ENCODE measurements at regions of chr17 and their contacts with region 1.

Region 1: DNA sequence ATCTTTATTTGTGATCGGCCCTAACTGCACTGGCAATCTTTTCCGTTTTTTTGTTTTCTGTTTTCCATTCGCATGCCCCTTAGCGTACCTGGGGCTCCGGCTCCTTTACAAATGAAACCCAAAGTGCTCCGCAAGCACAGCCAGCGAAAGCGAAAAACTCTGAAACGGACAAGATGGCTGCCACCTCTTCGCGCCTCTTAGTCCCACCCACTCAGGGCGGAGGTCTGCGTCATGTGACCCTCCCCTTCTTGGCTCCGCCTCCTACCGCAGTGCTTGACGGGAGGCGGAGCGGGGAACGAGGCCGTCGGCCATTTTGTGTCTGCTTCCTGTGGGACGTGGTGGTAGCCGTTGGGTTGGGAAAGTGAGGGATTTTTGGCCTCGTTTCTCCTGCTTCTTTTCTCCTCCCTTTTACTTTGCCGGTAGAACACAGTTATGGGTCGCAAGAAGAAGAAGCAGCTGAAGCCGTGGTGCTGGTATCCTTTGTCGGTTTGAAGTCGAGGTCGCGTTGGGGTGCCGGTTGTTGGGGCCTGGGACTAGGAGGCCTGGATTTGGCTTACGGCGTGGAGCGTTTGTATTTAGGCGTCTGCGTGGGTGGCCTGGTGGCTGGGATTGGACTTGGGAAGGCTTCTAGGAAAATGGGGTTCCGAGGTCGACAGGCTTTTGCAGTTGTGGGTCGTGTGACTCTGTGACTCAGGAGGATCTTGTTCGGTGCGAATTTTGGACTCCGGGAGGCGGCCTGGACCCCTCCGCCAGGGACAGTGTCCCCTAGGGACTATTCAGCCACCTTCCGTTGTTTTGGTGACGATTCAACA is at the start of gene ZNF207:
- DNase-seq: peak; percentile 85 to 95 (median 95)
- ATAC-seq: peak; percentile 100
- H3K4me3 ChIP-seq: peak within 1 kb of the TSS; percentile 98
- H3K4me3 Mint-ChIP-seq: peak within 1 kb of the TSS; percentile 90 to 100 (median 98)
- H3K27ac ChIP-seq: peak within 1 kb of the TSS; percentile 98
- H3K27ac Mint-ChIP-seq: peak within 1 kb of the TSS; percentile 95 to 100 (median 99)
- H3K4me1 ChIP-seq: peaks cover 13 to 25% of the 10 kb centered on the region in 2 donors
- H3K4me1 Mint-ChIP-seq: peaks cover 19 to 54% (median 38%) of the 10 kb centered on the region in 7 donors
- H3K27me3 ChIP-seq: no peaks in the 10 kb centered on the region
- H3K27me3 Mint-ChIP-seq: no peaks in the 10 kb centered on the region
- total RNA-seq, gene ZNF207: 248 to 288 (median 281) TPM

Region 2: DNA sequence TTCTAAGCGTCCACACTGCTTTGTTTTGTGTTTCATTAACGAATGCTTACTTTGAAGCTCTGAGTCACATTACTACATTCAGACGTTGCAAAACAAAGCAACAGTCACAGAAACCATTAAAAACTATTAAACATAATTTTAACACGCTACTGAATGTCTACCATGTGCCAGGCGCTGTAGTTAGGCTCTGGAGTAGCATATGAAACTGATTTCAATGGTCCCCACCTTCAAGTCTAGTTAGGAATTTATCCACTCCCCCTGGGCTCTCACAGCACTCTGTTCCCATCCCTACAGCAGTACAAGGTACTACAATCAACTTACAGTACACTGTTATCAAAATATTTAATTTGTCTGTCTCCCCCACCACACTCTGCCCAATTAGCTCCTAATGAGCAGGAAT is 449.2 kb before region 1 on chr17:
- CTCF ChIA-PET with region 1: no interaction called
- POLR2A ChIA-PET with region 1: no interaction called
- intact Hi-C with region 1: loop called (anchors 1 to 5 kb)
- DNase-seq: peak in 1 of 9 donors; percentile 9
- ATAC-seq: no peak
- H3K4me3 ChIP-seq: peak overlapping the region; percentile 80
- H3K4me3 Mint-ChIP-seq: no peak overlapping the region
- H3K27ac ChIP-seq: peak overlapping the region; percentile 81
- H3K27ac Mint-ChIP-seq: no peak overlapping the region
- H3K4me1 ChIP-seq: peaks cover 0 to 10% of the 10 kb centered on the region in 2 donors
- H3K4me1 Mint-ChIP-seq: peaks cover 0 to 25% (median 9%) of the 10 kb centered on the region in 7 donors
- H3K27me3 ChIP-seq: no peaks in the 10 kb centered on the region
- H3K27me3 Mint-ChIP-seq: no peaks in the 10 kb centered on the region

Region 3: GRCh38 chr17:32006957-32007462 is 343.1 kb before region 1 on chr17 and contains the start of gene LRRC37B:
- CTCF ChIA-PET with region 1: no interaction called
- POLR2A ChIA-PET with region 1: interaction called, 5 read pairs
- intact Hi-C with region 1: loop called in 1 of 2 experiments (anchors 2 kb)
- DNase-seq: peak; percentile 80 to 95 (median 87)
- ATAC-seq: peak; percentile 98
- H3K4me3 ChIP-seq: peak within 1 kb of the TSS; percentile 97
- H3K4me3 Mint-ChIP-seq: peak within 1 kb of the TSS; percentile 86 to 98 (median 95)
- H3K27ac ChIP-seq: peak within 1 kb of the TSS; percentile 85
- H3K27ac Mint-ChIP-seq: peak within 1 kb of the TSS; percentile 87 to 98 (median 93)
- H3K4me1 ChIP-seq: peaks cover 9 to 14% of the 10 kb centered on the region in 2 donors
- H3K4me1 Mint-ChIP-seq: peaks cover 25 to 44% (median 35%) of the 10 kb centered on the region in 7 donors
- H3K27me3 ChIP-seq: no peaks in the 10 kb centered on the region
- H3K27me3 Mint-ChIP-seq: peaks cover 0 to 6% (median 0%) of the 10 kb centered on the region in 5 donors
- total RNA-seq, gene LRRC37B: 42.1 to 69.9 (median 56.2) TPM

Region 4: DNA sequence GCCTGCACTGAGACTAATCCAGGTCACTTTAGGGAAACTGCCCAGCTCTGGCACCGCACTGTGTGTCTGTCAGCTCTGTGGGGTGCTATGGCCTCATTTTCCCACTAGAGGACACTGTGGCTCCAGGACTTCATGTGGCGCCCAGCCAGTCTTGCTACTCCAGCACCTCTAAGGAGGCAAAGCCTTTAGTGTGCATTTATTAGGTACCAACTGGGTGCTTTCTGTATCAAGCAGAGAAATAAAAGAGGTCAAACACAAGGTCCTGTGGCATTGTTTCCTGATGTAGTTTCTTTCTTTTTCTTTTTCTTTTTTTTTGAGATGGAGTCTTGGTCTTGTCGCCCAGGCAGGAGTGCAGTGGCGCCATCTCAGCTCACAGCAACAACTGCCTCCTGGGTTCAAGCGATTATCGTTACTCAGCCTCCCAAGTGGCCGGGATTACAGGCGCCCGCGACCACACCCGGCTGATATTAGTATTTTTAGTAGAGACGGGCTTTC is 96.9 kb before region 1 on chr17:
- CTCF ChIA-PET with region 1: no interaction called
- POLR2A ChIA-PET with region 1: no interaction called
- intact Hi-C with region 1: loop called in 1 of 2 experiments (anchors 1 kb)
- DNase-seq: peak in 7 of 9 donors; percentile 18 to 75 (median 40)
- ATAC-seq: peak; percentile 98
- H3K4me3 ChIP-seq: no peak overlapping the region
- H3K4me3 Mint-ChIP-seq: no peak overlapping the region
- H3K27ac ChIP-seq: no peak overlapping the region
- H3K27ac Mint-ChIP-seq: no peak overlapping the region
- H3K4me1 ChIP-seq: no peaks in the 10 kb centered on the region
- H3K4me1 Mint-ChIP-seq: peaks cover 0 to 4% (median 0%) of the 10 kb centered on the region in 7 donors
- H3K27me3 ChIP-seq: no peaks in the 10 kb centered on the region
- H3K27me3 Mint-ChIP-seq: peaks cover 0 to 37% (median 0%) of the 10 kb centered on the region in 5 donors

Region 5: DNA sequence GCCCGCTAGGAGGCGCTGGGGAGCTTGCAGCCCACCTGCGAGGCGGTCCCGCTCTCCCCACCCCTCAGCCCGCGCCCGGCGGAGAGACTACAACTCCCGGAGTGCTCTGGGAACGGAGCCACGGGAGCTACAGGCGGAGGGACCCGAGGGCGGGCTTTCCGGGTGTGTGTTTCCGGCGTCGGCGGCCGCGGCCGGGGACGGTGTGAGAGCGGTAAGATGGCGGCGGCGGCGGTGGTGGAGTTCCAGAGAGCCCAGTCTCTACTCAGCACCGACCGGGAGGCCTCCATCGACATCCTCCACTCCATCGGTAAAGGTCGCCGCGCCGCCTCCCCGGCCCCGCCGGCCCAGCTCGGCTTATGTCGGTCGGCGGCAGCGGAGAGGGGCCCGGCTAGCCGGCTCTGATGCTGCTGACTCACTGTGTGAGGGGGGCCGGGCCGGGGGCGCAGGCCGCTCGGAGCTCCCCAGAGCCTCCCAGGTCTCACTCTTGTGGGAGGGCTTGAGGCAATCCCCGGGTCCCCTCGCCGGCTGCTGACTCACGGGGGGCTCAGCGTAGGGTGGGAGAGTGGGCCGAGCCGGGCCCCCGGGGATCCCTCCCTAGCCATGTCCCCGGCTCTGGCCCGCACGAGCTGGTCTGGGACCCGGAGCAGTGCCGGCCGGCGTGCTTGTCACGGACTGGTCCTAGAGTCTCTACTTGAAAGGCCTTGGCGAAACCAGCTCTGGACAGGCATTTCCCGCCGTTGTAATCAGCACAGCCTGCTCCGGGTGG is 94.4 kb after region 1 on chr17 and contains the start of gene PSMD11:
- CTCF ChIA-PET with region 1: no interaction called
- POLR2A ChIA-PET with region 1: interaction called, 9 read pairs
- intact Hi-C with region 1: loop called (anchors 1 kb)
- DNase-seq: peak; percentile 98 to 100 (median 99)
- ATAC-seq: peak; percentile 99
- H3K4me3 ChIP-seq: peak within 1 kb of the TSS; percentile 80
- H3K4me3 Mint-ChIP-seq: peak within 1 kb of the TSS; percentile 78 to 93 (median 86)
- H3K27ac ChIP-seq: peak within 1 kb of the TSS; percentile 94
- H3K27ac Mint-ChIP-seq: peak within 1 kb of the TSS; percentile 52 to 83 (median 78)
- H3K4me1 ChIP-seq: peaks cover 13 to 14% of the 10 kb centered on the region in 2 donors
- H3K4me1 Mint-ChIP-seq: peaks cover 25 to 46% (median 36%) of the 10 kb centered on the region in 7 donors
- H3K27me3 ChIP-seq: no peaks in the 10 kb centered on the region
- H3K27me3 Mint-ChIP-seq: peaks cover 0 to 23% (median 0%) of the 10 kb centered on the region in 5 donors
- total RNA-seq, gene PSMD11: 60.1 to 112 (median 67.5) TPM

Region 6: GRCh38 chr17:32609085-32609484 is 259.0 kb after region 1 on chr17:
- CTCF ChIA-PET with region 1: no interaction called
- POLR2A ChIA-PET with region 1: no interaction called
- intact Hi-C with region 1: loop called in 1 of 2 experiments (anchors 2 kb)
- DNase-seq: peak; percentile 48 to 81 (median 72)
- ATAC-seq: peak; percentile 100
- H3K4me3 ChIP-seq: no peak overlapping the region
- H3K4me3 Mint-ChIP-seq: no peak overlapping the region
- H3K27ac ChIP-seq: no peak overlapping the region
- H3K27ac Mint-ChIP-seq: peak overlapping the region in 2 of 9 donors; percentile 0 to 14
- H3K4me1 ChIP-seq: no peaks in the 10 kb centered on the region
- H3K4me1 Mint-ChIP-seq: peaks cover 6 to 9% (median 8%) of the 10 kb centered on the region in 7 donors
- H3K27me3 ChIP-seq: no peaks in the 10 kb centered on the region
- H3K27me3 Mint-ChIP-seq: peaks cover 0 to 6% (median 0%) of the 10 kb centered on the region in 5 donors

Measured in naive thymus-derived CD4-positive, alpha-beta T cell (primary cell).